IMR-90 (cell line): ENCODE measurements at regions of chr3 and their contacts with region 1.

Region 1: DNA sequence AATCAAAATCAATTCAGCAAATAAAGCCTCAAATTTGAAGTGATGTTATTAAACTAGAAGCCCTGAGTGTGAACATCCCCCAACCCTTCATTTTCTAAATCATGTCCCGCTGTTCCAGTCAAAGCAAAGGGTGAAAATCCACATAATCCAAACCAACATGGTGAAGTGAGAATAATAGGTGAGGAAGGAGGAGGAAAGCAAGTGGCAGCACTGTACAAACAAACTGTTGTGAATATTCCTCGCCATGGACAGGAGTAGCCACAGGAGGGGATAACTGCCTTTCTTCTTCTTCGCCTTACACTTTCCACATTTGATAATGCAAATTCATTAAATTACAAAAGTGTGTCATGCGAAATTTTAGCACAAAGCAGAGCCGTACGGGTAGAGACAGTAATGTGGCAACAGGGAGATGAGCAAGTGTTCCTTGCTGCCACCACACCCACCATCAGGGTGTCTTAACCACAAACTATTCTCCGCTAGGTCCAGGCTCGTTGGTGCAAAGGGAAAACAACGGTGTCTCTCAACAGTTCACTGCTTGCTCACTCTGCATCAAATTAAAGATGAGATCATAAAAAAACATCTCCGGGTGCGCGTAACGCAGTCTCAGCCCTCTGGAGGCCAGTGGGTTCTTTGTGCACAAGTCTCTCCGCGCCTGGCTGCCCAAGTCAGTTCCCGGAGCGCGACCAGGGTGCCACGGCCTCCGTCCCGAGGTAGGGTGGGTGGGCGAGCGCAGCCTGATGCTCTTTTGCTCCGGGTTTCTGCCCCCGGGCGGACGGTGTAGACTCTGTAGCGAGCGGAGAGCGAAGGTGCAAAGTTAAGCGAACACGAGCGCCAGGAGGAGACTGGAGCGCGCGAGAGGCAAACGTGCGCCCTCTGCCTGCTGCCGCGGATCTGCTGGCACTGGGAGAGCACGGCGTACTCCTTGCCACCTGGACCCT is 6.8 kb downstream of the EPHA3 start:
- DNase-seq: peak; percentile 42
- ATAC-seq: peak; percentile 95
- H3K4me3 ChIP-seq: peak overlapping the region; percentile 58
- H3K27ac ChIP-seq: no peak overlapping the region
- H3K4me1 ChIP-seq: no peaks in the 10 kb centered on the region
- H3K27me3 ChIP-seq: no peaks in the 10 kb centered on the region
- CTCF ChIP-seq: peak; percentile 51
- POLR2A ChIP-seq: no peak
- RAD21 ChIP-seq: peak; percentile 43

Region 2: DNA sequence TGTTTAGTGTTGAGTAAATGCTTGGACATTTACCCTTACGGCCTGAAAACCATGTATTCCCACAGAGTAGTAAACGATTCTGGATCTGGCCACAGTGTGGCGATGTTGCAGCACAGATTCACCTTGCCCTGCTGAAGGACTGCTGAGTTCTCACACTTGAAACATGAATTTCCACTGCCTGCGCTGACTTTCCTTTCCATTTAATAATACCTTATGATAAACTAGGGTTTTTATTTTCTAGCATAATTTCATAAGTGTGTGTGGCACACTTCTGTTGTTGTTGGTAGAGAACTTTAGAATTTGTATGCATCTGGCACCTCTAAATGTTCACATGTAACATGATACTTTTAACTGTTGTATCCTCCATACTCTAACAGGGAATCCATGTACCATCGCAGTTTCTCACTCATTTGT is 910.5 kb before region 1 on chr3:
- CTCF ChIA-PET with region 1: no interaction called
- POLR2A ChIA-PET with region 1: no interaction called
- dilution Hi-C with region 1: no loop called
- in situ Hi-C with region 1: no loop called
- intact Hi-C with region 1: loop called (anchors 5 kb)
- DNase-seq: peak; percentile 67
- ATAC-seq: peak; percentile 100
- H3K4me3 ChIP-seq: no peak overlapping the region
- H3K27ac ChIP-seq: no peak overlapping the region
- H3K4me1 ChIP-seq: no peaks in the 10 kb centered on the region
- H3K27me3 ChIP-seq: 0 out of 2 replicates have a peak, but pooled peaks cover 1% of the 10 kb centered on the region
- CTCF ChIP-seq: peak; percentile 83
- POLR2A ChIP-seq: no peak
- RAD21 ChIP-seq: peak; percentile 87

Region 3: GRCh38 chr3:88219138-88219792 is 894.9 kb before region 1 on chr3:
- CTCF ChIA-PET with region 1: no interaction called
- POLR2A ChIA-PET with region 1: no interaction called
- dilution Hi-C with region 1: no loop called
- in situ Hi-C with region 1: no loop called
- intact Hi-C with region 1: loop called (anchors 1 kb)
- DNase-seq: peak; percentile 49
- ATAC-seq: peak; percentile 87
- H3K4me3 ChIP-seq: no peak overlapping the region
- H3K27ac ChIP-seq: no peak overlapping the region
- H3K4me1 ChIP-seq: no peaks in the 10 kb centered on the region
- H3K27me3 ChIP-seq: no peaks in the 10 kb centered on the region
- CTCF ChIP-seq: peak; percentile 65
- POLR2A ChIP-seq: no peak
- RAD21 ChIP-seq: peak; percentile 70

Region 4: GRCh38 chr3:90184861-90185260 is 1070.7 kb after region 1 on chr3:
- CTCF ChIA-PET with region 1: no interaction called
- POLR2A ChIA-PET with region 1: no interaction called
- dilution Hi-C with region 1: no loop called
- in situ Hi-C with region 1: no loop called
- intact Hi-C with region 1: loop called (anchors 10 kb)
- DNase-seq: peak; percentile 8
- ATAC-seq: 0 out of 2 replicates have a peak, but pooled peaks have one; percentile 21
- H3K4me3 ChIP-seq: no peak overlapping the region
- H3K27ac ChIP-seq: no peak overlapping the region
- H3K4me1 ChIP-seq: no peaks in the 10 kb centered on the region
- H3K27me3 ChIP-seq: no peaks in the 10 kb centered on the region
- CTCF ChIP-seq: no peak
- POLR2A ChIP-seq: no peak
- RAD21 ChIP-seq: no peak